Activated B cell treated with CpG ODN at 0.5 μM for 24 hours (primary cell): ENCODE measurements at regions of chr17 and their contacts with region 1.

Region 1: DNA sequence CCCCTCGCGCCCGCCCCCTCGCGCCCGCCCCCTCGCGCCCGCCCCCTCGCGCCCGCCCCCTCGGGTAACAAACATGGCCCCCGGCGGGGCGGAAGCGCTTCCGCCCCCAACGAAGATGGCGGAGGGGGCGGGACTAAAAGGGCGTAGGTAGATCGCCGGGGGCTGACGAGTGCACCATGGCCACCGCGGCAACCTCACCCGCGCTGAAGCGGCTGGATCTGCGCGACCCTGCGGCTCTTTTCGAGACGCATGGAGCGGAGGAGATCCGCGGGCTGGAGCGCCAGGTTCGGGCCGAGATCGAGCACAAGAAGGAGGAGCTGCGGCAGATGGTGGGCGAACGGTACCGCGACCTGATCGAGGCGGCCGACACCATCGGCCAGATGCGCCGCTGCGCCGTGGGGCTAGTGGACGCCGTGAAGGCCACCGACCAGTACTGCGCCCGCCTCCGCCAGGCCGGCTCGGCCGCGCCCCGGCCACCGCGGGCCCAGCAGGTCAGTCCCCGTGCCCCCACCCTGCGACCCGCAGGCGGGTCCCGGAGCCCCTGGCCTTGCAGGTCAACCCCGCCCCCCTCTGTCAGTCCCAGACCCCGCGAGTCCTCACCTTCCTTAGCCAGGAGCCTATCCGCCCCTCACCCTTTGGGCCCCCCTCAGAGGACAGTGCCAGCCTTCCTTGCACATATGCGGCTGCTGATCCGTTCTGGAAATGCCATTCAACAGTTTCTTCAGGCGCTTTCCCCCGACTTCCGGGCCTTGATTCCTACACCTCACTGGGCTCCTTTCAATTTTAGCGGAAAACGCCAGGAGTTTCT is at the start of gene COG1:
- DNase-seq: peak; percentile 65
- ATAC-seq: peak; percentile 87
- H3K4me3 Mint-ChIP-seq: peak within 1 kb of the TSS; percentile 96
- H3K27ac Mint-ChIP-seq: peak within 1 kb of the TSS; percentile 90
- H3K4me1 Mint-ChIP-seq: peaks cover 18% of the 10 kb centered on the region
- H3K27me3 Mint-ChIP-seq: no peaks in the 10 kb centered on the region
- CTCF ChIP-seq: no peak
- total RNA-seq, gene COG1: 35.7 and 42.2 TPM in 2 replicates

Region 2: DNA sequence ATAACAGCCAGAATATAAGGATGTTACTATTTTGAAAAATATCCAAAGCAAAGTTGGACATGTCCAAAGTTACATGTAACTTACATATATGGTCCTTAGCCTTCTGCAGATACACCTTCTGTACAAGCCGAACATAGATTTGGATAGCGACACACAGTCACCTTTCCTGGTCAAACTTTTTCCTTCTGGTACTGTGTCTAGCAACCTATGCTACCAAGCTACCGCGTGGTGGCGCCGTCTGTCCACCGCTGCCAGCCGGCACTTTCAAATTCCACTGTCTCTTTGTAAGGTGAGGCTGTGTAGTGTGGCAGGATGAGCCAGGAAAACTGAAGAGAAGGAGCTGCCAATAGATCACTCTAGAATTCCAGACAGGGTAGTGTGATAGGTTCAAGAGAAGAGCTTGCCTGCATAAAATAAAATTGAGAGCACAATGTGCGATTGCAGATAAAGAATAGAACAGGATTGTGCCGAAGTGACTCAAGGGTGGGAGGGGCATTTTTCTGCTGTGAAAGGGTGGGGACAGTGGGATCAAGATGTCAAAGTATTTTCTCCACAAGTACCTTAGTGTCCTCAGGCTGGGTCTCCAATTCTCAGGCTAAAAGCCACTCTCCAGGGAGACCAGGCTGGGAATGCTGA is 467.5 kb before region 1 on chr17:
- CTCF ChIA-PET with region 1: interaction called, 6 read pairs
- POLR2A ChIA-PET with region 1: no interaction called
- intact Hi-C with region 1: loop called (anchors 1 kb)
- DNase-seq: no peak
- ATAC-seq: no peak
- H3K4me3 Mint-ChIP-seq: no peak overlapping the region
- H3K27ac Mint-ChIP-seq: no peak overlapping the region
- H3K4me1 Mint-ChIP-seq: peaks cover 23% of the 10 kb centered on the region
- H3K27me3 Mint-ChIP-seq: no peaks in the 10 kb centered on the region
- CTCF ChIP-seq: no peak

Region 3: GRCh38 chr17:72804949-72805707 is 388.0 kb before region 1 on chr17:
- CTCF ChIA-PET with region 1: no interaction called
- POLR2A ChIA-PET with region 1: no interaction called
- intact Hi-C with region 1: no loop called
- DNase-seq: no peak
- ATAC-seq: no peak
- H3K4me3 Mint-ChIP-seq: no peak overlapping the region
- H3K27ac Mint-ChIP-seq: no peak overlapping the region
- H3K4me1 Mint-ChIP-seq: no peaks in the 10 kb centered on the region
- H3K27me3 Mint-ChIP-seq: no peaks in the 10 kb centered on the region
- CTCF ChIP-seq: no peak

Region 4: DNA sequence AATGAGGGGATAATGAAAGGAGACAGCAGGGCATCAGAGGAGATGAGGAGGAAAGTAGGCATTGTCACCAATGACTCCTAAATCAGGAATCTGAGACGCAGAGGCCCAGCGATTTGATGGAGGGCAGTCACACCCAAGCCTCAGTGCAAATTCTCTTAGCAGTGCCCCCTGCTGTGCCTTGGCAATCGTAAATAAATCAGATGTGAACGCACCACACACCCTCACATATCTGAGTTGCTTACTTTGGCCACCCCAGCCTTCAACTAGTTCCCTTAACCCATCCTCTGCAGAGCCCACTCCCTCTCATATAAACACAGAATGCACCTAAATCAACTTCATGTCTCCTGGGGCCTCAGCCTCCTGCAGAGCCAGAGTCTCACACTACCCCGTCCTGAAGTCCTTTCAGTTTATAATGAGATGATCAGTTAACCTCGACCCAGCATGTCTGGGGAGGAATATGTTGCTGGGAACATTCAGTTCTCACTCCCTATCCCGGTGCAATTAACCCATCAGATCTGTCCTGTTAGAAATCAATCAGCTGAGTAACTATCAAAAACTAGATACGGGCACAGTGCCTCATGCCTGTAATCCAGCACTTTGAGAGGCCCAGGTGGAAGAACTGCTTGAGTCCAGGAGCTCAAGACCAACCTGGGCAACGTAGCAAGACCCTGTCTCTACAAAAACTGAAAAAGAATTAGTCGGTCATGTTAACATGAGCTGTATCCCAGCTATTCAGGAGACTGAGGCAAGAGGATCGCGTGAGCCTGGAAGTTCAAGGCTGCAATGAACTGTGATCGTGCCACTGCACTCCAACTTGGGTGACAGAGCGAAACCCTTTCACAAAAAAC is 179.1 kb before region 1 on chr17:
- CTCF ChIA-PET with region 1: no interaction called
- POLR2A ChIA-PET with region 1: no interaction called
- intact Hi-C with region 1: no loop called
- DNase-seq: no peak
- ATAC-seq: no peak
- H3K4me3 Mint-ChIP-seq: no peak overlapping the region
- H3K27ac Mint-ChIP-seq: no peak overlapping the region
- H3K4me1 Mint-ChIP-seq: peaks cover 15% of the 10 kb centered on the region
- H3K27me3 Mint-ChIP-seq: no peaks in the 10 kb centered on the region
- CTCF ChIP-seq: no peak

Region 5: DNA sequence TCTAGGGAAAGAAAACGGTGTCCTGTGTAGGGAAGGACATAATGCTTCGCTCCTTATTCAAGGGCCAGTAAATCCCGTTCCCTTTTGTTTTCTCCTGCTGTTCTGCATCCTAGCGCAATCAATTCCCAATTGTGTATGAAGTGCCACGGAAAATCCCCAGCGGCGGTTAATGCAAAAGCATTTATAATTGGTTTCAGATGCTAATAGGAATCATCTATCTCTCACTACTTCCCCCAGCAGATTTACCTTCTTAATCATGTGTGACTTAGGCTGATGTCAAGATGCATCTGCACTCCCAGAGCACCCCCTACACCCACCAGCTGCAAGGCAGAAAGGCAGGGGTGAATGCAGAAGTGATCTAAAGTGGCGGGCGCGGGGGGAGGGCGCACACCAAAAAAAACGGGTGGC is 61.0 kb before region 1 on chr17:
- CTCF ChIA-PET with region 1: interaction called, 3 read pairs
- POLR2A ChIA-PET with region 1: no interaction called
- intact Hi-C with region 1: loop called (anchors 2 kb)
- DNase-seq: peak; percentile 18
- ATAC-seq: peak; percentile 98
- H3K4me3 Mint-ChIP-seq: peak overlapping the region; percentile 44
- H3K27ac Mint-ChIP-seq: peak overlapping the region; percentile 14
- H3K4me1 Mint-ChIP-seq: peaks cover 19% of the 10 kb centered on the region
- H3K27me3 Mint-ChIP-seq: peaks cover 3% of the 10 kb centered on the region
- CTCF ChIP-seq: no peak

Region 6: GRCh38 chr17:73311781-73312641 is 118.9 kb after region 1 on chr17 and contains the start of gene CDC42EP4:
- CTCF ChIA-PET with region 1: no interaction called
- POLR2A ChIA-PET with region 1: no interaction called
- intact Hi-C with region 1: loop called (anchors 1 kb)
- DNase-seq: peak; percentile 76
- ATAC-seq: peak; percentile 91
- H3K4me3 Mint-ChIP-seq: peak within 1 kb of the TSS; percentile 84
- H3K27ac Mint-ChIP-seq: no peak within 1 kb of the TSS
- H3K4me1 Mint-ChIP-seq: peaks cover 19% of the 10 kb centered on the region
- H3K27me3 Mint-ChIP-seq: no peaks in the 10 kb centered on the region
- CTCF ChIP-seq: no peak
- total RNA-seq, gene CDC42EP4: 0.61 and 0.95 TPM in 2 replicates

Region 7: DNA sequence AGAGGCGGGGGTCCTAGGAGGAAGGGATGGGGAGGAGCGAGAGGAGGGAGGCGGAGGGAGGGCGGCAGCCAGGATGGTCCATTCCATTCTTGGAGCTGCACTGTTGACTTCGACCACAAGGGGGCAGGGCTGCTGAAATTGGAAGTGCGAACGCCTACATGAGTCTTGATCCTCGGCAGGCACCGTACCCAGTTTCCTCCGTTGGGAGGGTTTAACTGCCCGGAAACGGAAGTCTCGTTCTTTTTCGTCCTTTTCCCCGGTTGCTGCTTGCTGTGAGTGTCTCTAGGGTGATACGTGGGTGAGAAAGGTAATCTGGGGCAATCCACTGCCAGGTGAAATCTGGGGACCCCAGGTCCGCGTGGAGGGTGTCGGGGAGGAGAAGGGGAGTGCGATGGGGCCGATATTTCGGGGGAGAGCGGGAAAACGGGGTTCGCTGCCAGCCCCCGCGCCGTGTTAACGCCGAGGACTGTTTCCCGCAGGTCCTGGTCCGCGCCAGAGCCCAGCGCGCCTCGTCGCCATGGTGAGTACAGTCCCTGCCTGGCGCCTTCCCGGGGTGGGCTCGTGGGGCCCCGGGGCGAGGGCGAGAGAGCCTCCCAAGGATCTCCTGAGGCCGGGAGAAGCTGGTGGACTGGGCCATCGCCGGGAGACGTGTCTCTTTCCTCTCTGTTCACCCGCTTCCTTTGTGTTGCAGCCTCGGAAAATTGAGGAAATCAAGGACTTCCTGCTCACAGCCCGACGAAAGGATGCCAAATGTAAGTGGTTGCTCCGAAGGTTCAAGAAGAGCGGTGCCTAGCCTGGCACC is 1010.5 kb after region 1 on chr17 and contains the start of gene RPL38:
- CTCF ChIA-PET with region 1: no interaction called
- POLR2A ChIA-PET with region 1: no interaction called
- intact Hi-C with region 1: loop called (anchors 5 kb)
- DNase-seq: peak; percentile 90
- ATAC-seq: peak; percentile 94
- H3K4me3 Mint-ChIP-seq: peak within 1 kb of the TSS; percentile 100
- H3K27ac Mint-ChIP-seq: peak within 1 kb of the TSS; percentile 98
- H3K4me1 Mint-ChIP-seq: peaks cover 47% of the 10 kb centered on the region
- H3K27me3 Mint-ChIP-seq: peaks cover 23% of the 10 kb centered on the region
- CTCF ChIP-seq: no peak
- total RNA-seq, gene RPL38: 1,330 and 1,676 TPM in 2 replicates